ENCODE measurements at regions of chr19 and their contacts with region 1.

Region 1: DNA sequence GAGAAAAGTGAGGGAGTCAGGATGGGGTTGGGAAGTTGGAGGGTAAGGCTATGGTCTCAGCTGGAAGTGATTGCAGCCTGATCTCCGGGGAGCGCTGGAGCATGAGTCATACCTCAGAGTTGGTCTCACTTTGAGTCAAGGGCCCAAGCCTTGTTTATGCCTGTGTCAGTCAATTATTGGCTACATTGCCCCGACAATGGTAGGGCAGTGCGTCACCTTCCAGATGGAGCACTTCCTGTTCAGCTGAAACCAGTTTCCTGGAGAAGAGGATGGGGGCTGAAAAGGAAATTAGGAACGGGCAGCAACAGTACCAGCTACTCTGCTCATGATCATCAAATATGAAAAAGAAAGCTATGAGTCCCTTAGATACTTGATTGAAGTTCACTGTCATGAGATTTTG is 60.4 kb downstream of the ADGRE1 start:
- DNase-seq: peak; percentile 86
- H3K4me3 Mint-ChIP-seq: no peak overlapping the region
- H3K27ac Mint-ChIP-seq: peak overlapping the region; percentile 61
- H3K4me1 Mint-ChIP-seq: peaks cover 13% of the 10 kb centered on the region
- H3K27me3 Mint-ChIP-seq: no peaks in the 10 kb centered on the region

Region 2: DNA sequence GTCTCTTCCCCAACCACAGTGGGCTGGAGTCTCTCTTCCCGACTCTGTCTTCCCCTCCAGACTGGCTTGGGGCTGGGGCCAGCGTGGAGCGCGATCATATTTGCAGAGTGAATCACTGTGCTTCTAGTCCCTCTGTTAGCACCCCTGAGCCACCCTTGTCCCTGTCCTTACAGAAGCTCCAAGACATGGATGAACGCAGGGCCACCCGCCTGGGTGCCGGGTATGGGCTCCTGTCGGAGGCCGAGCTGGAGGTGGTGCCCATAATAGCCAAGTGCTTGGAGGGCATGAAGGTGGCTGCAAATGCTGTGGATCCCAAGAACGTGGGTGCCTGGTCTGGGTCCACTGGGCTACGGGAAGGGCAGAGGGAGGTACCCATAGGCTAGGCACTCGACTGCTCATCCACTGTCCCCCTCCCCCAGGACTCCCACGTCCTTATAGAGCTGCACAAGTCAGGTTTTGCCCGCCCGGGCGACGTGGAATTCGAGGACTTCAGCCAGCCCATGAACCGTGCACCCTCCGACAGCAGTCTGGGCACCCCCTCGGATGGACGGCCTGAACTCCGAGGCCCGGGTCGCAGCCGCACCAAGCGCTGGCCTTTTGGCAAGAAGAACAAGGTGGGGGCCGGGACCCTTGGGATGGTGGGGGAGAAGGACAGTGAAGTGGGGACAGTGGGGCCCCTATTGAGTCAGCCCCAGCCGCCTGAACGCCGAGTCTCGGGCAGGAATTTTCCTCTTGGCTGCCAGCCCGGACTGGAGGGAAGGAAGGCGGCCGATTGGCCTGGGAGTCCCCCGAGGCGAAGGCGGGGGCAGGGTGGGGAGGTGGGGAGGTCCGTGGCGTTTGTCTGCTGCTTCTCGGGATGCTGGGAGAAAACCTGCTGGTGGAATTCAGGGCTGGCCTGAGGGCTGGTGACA is 203.1 kb before region 1 on chr19:
- intact Hi-C with region 1: no loop called
- DNase-seq: no peak
- H3K4me3 Mint-ChIP-seq: no peak overlapping the region
- H3K27ac Mint-ChIP-seq: no peak overlapping the region
- H3K4me1 Mint-ChIP-seq: peaks cover 11% of the 10 kb centered on the region
- H3K27me3 Mint-ChIP-seq: no peaks in the 10 kb centered on the region

Region 3: DNA sequence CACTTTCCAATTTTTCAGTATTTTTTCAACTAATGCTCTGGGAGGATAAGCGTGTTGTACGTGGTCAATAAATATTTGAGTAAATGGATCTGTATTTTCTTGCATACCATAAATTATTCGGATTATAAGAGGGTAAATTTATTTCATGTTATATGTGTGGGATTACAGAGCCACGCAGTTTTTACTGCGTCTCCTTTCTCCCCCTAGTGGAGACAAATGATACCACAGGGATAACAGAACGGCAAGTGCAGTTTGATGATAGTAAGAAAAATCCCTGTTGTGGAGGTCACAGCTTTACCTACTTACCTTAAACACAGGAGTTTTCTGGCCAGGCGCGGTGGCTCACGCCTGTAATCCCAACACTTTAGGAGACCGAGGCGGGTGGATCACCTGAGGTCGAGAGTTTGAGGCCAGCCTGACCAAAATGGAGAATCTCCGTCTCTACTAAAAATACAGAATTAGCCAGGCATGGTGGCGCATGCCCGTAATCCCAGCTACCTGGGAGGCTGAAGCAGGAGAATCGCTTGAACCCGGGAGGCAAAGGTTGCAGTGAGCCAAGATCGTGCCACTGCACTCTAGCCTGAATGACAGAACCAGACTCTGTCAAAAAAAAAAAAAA is 56.7 kb after region 1 on chr19:
- intact Hi-C with region 1: loop called (anchors 10 kb)
- DNase-seq: peak; percentile 81
- H3K4me3 Mint-ChIP-seq: no peak overlapping the region
- H3K27ac Mint-ChIP-seq: peak overlapping the region; percentile 48
- H3K4me1 Mint-ChIP-seq: peaks cover 15% of the 10 kb centered on the region
- H3K27me3 Mint-ChIP-seq: no peaks in the 10 kb centered on the region